Naive thymus-derived CD4-positive, alpha-beta T cell (primary cell): ENCODE measurements at regions of chr4 and their contacts with region 1.

Region 1: DNA sequence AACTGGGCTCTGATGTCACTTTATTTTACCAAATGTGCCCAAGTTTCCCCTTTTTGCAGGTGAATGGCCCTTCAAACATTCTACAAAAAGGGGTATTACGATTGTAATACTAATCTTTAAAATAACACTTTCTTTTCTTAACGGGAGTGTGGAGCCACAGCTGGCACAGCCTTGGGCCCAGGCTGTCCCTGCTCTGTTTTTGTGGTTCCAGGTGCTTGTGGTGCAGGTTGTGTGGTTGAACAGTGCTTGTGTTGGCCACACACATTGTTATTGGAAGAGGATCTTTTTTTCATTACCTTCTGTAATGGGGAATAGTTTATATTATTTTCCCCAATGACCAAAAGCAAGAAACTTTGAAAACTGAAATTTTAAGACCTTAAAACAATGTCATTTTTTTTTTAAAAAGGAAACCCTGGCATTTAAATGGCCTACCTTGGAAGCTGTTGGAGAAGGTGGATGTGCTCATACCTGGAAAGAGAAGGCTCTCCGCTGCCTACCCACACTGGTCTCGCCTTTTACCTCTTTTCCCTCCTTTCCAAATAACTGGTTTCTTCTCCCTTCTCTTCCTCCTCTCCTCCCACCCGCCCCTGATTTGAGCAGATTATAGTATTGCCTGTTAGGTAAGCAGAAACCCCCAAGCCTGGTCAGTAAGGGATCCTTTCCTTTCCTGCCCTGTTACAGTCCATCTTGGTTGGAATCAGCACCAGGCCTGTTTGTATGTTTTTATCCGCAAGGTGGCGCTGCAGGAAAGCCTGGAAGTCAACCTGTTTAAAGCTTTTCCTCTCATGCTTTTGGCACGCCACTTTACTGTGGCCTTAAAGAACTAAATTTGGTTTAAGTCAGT is 28.6 kb downstream of the HADH start:
- DNase-seq: peak; percentile 63 to 86 (median 76)
- ATAC-seq: peak; percentile 84
- H3K4me3 ChIP-seq: no peak overlapping the region
- H3K4me3 Mint-ChIP-seq: no peak overlapping the region
- H3K27ac ChIP-seq: no peak overlapping the region
- H3K27ac Mint-ChIP-seq: peak overlapping the region in 6 of 9 donors; percentile 5 to 86 (median 52)
- H3K4me1 ChIP-seq: no peaks in the 10 kb centered on the region
- H3K4me1 Mint-ChIP-seq: peaks cover 0 to 27% (median 14%) of the 10 kb centered on the region in 7 donors
- H3K27me3 ChIP-seq: no peaks in the 10 kb centered on the region
- H3K27me3 Mint-ChIP-seq: no peaks in the 10 kb centered on the region

Region 2: GRCh38 chr4:108473221-108473620 is 455.0 kb after region 1 on chr4:
- CTCF ChIA-PET with region 1: interaction called, 4 read pairs
- POLR2A ChIA-PET with region 1: no interaction called
- intact Hi-C with region 1: loop called in 1 of 2 experiments (anchors 1 kb)
- DNase-seq: peak in 4 of 9 donors; percentile 17 to 43 (median 22)
- ATAC-seq: peak; percentile 40
- H3K4me3 ChIP-seq: no peak overlapping the region
- H3K4me3 Mint-ChIP-seq: no peak overlapping the region
- H3K27ac ChIP-seq: no peak overlapping the region
- H3K27ac Mint-ChIP-seq: peak overlapping the region in 2 of 9 donors; percentile 25 to 31
- H3K4me1 ChIP-seq: peaks cover 0 to 7% of the 10 kb centered on the region in 2 donors
- H3K4me1 Mint-ChIP-seq: peaks cover 11 to 65% (median 58%) of the 10 kb centered on the region in 7 donors
- H3K27me3 ChIP-seq: no peaks in the 10 kb centered on the region
- H3K27me3 Mint-ChIP-seq: no peaks in the 10 kb centered on the region

Region 3: DNA sequence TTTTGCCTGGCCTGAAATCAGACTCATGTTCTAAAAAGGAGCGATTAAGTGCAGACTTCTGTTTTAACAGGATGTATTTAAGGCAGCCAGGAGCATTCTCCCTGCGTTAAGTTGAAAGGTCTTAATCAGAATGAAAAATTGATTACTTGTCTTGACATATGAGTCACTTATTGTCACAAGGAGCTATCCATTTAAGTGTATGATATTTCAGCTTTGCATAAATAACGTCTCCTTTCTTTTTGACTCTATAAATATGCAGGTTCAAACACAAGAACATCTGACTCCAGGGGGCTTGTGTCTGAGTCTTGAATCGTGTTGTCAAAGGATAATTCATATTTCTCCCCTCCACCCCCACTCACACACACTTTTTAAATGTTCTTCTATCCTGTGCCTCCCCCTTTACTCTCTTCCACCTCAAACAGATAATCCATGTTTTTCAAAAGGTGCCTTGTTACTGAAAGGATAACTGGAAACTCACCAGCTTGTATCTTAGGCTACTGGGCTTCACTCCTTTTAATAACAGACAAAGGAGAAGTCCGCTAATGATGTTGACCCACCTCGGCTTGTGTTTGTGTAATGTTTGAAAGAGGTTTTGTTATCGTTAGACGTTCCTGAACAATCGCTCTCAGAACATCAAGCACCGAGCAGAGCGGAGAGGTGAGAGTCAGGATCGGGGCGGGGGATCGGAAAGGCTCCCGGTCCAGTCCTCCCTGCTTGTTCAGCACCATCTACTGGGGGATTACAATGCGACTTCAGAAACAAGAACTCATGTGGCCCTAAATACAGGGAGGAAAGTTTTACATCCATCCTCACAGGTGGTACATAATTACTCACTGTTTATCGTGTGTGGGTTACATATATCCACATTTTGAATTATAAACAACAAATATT is 494.6 kb after region 1 on chr4:
- CTCF ChIA-PET with region 1: interaction called, 10 read pairs
- POLR2A ChIA-PET with region 1: no interaction called
- intact Hi-C with region 1: loop called (anchors 1 kb)
- DNase-seq: peak in 7 of 9 donors; percentile 42 to 68 (median 58)
- ATAC-seq: peak; percentile 82
- H3K4me3 ChIP-seq: peak overlapping the region; percentile 6
- H3K4me3 Mint-ChIP-seq: peak overlapping the region; percentile 72 to 87 (median 80)
- H3K27ac ChIP-seq: no peak overlapping the region
- H3K27ac Mint-ChIP-seq: peak overlapping the region in 7 of 9 donors; percentile 33 to 79 (median 71)
- H3K4me1 ChIP-seq: peaks cover 0 to 10% of the 10 kb centered on the region in 2 donors
- H3K4me1 Mint-ChIP-seq: peaks cover 9 to 37% (median 23%) of the 10 kb centered on the region in 7 donors
- H3K27me3 ChIP-seq: no peaks in the 10 kb centered on the region
- H3K27me3 Mint-ChIP-seq: peaks cover 0 to 11% (median 0%) of the 10 kb centered on the region in 5 donors

Region 4: GRCh38 chr4:108637856-108638255 is 619.6 kb after region 1 on chr4:
- CTCF ChIA-PET with region 1: interaction called, 3 read pairs
- POLR2A ChIA-PET with region 1: no interaction called
- intact Hi-C with region 1: loop called in 1 of 2 experiments (anchors 1 kb)
- DNase-seq: no peak
- ATAC-seq: no peak
- H3K4me3 ChIP-seq: no peak overlapping the region
- H3K4me3 Mint-ChIP-seq: no peak overlapping the region
- H3K27ac ChIP-seq: no peak overlapping the region
- H3K27ac Mint-ChIP-seq: no peak overlapping the region
- H3K4me1 ChIP-seq: no peaks in the 10 kb centered on the region
- H3K4me1 Mint-ChIP-seq: peaks cover 0 to 9% (median 6%) of the 10 kb centered on the region in 7 donors
- H3K27me3 ChIP-seq: no peaks in the 10 kb centered on the region
- H3K27me3 Mint-ChIP-seq: no peaks in the 10 kb centered on the region

Region 5: GRCh38 chr4:108762559-108763225 is 744.4 kb after region 1 on chr4 and contains the start of gene ETNPPL:
- CTCF ChIA-PET with region 1: no interaction called
- POLR2A ChIA-PET with region 1: no interaction called
- intact Hi-C with region 1: loop called in 1 of 2 experiments (anchors 10 kb)
- DNase-seq: peak; percentile 9 to 42 (median 26)
- ATAC-seq: peak; percentile 61
- H3K4me3 ChIP-seq: peak within 1 kb of the TSS; percentile 54
- H3K4me3 Mint-ChIP-seq: peak within 1 kb of the TSS; percentile 83 to 96 (median 90)
- H3K27ac ChIP-seq: no peak within 1 kb of the TSS
- H3K27ac Mint-ChIP-seq: peak within 1 kb of the TSS in 1 of 9 donors; percentile 76
- H3K4me1 ChIP-seq: peaks cover 0 to 10% of the 10 kb centered on the region in 2 donors
- H3K4me1 Mint-ChIP-seq: peaks cover 10 to 17% (median 13%) of the 10 kb centered on the region in 7 donors
- H3K27me3 ChIP-seq: peaks cover 3 to 7% of the 10 kb centered on the region in 2 donors
- H3K27me3 Mint-ChIP-seq: peaks cover 24 to 62% (median 46%) of the 10 kb centered on the region in 5 donors
- total RNA-seq, gene ETNPPL: not detected

Region 6: GRCh38 chr4:109406338-109406931 is 1388.2 kb after region 1 on chr4:
- CTCF ChIA-PET with region 1: interaction called, 3 read pairs
- POLR2A ChIA-PET with region 1: no interaction called
- intact Hi-C with region 1: loop called in 1 of 2 experiments (anchors 5 kb)
- DNase-seq: peak in 7 of 9 donors; percentile 21 to 63 (median 42)
- ATAC-seq: peak; percentile 79
- H3K4me3 ChIP-seq: no peak overlapping the region
- H3K4me3 Mint-ChIP-seq: no peak overlapping the region
- H3K27ac ChIP-seq: no peak overlapping the region
- H3K27ac Mint-ChIP-seq: no peak overlapping the region
- H3K4me1 ChIP-seq: no peaks in the 10 kb centered on the region
- H3K4me1 Mint-ChIP-seq: no peaks in the 10 kb centered on the region
- H3K27me3 ChIP-seq: no peaks in the 10 kb centered on the region
- H3K27me3 Mint-ChIP-seq: peaks cover 0 to 27% (median 0%) of the 10 kb centered on the region in 5 donors